Activated CD4-positive, alpha-beta memory T cell treated with anti-CD3 and anti-CD28 coated beads, Interleukin-2, amount 10 ng/mL, durations not matched to agents 7 days and 5 days (primary cell): ENCODE measurements at regions of chr7 and their contacts with region 1.

Region 1: DNA sequence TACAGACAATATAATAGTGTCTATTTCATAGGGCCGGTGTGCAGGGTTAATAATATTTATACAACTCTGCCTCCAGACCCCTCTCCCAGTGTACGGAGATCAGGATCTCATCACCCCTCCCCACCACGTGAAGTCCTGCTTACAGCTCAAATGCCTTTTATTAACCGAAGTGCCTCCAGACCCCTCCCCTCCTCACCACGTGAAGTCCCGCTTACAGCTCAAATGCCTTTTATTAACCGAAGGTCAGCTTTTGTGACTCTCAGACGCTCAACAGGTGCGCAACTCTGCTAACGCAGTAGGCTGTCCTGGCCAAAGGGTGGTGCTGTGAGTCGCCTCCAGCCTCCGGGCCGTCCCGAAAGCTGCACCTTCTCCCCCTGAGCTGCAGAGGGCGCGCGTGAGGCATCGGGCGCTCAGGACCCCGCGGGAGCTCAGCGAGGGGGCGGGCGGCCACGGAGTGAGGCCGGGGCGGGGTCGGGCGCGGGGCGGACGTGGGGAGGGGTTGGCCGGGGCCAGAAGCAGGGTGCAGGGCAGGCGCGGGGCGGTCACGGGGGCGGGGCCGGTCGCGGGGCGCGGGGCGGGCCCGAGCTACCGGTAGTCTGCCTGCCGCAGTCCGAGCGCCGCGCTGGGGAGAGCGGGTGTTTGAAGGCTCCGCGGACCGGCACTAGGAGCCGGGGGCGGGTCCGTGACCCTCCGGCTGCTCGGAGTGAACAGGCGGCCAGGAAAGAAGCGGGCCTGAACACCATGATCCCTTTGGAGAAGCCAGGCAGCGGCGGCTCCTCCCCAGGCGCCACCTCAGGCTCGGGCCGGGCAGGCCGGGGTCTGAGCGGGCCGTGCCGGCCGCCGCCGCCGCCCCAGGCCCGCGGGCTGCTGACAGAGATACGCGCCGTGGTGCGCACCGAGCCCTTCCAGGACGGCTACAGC is at the start of gene STK17A:
- DNase-seq: peak; percentile 96
- H3K4me3 Mint-ChIP-seq: peak within 1 kb of the TSS; percentile 100
- H3K27ac Mint-ChIP-seq: peak within 1 kb of the TSS; percentile 100
- H3K4me1 Mint-ChIP-seq: peaks cover 31% of the 10 kb centered on the region
- H3K27me3 Mint-ChIP-seq: peaks cover 19% of the 10 kb centered on the region
- total RNA-seq, gene STK17A: 89.5 to 90.3 TPM

Region 2: GRCh38 chr7:42843205-42843800 is 739.5 kb before region 1 on chr7:
- CTCF ChIA-PET with region 1: no interaction called
- POLR2A ChIA-PET with region 1: no interaction called
- DNase-seq: no peak
- H3K4me3 Mint-ChIP-seq: no peak overlapping the region
- H3K27ac Mint-ChIP-seq: no peak overlapping the region
- H3K4me1 Mint-ChIP-seq: no peaks in the 10 kb centered on the region
- H3K27me3 Mint-ChIP-seq: peaks cover 20% of the 10 kb centered on the region

Region 3: DNA sequence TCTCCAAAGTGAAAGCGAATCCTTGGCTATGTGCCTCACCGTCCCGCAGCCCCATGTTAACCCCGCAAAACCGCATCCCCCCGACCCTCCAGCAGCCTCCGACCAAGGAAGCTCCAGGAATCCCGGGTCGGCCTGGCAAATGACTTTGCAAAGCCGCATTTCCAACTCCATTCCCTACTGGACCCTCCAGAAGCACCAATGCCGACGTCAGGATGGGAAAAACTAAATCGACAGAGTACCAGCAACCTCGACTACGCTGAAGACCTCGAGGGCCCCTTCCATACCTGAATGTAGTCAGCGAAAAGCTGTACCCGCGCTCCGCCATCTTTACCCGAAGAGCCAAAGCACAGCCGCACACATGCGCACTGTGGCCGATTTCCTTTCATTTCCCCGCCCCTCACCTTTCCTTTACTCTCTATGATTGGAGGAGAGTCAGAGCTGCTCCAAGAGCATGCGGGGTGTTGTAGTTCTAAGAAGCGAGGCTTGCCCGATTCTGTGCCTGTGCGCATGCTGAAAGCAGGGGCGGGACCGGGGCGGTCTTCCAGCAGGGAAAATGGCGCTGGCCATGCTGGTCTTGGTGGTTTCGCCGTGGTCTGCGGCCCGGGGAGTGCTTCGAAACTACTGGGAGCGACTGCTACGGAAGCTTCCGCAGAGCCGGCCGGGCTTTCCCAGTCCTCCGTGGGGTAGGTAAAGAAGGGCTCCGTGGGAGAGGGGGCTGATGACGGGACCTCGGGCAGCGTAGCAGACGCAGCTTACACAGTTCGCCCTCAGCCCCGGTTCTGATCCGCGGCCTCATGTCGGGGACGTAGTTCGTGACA is 650.7 kb before region 1 on chr7 and contains the starts of genes MRPL32 and PSMA2:
- CTCF ChIA-PET with region 1: interaction called, 6 read pairs
- POLR2A ChIA-PET with region 1: interaction called, 10 read pairs
- DNase-seq: peak; percentile 95
- H3K4me3 Mint-ChIP-seq: peak within 1 kb of the TSS; percentile 97
- H3K27ac Mint-ChIP-seq: peak within 1 kb of the TSS; percentile 93
- H3K4me1 Mint-ChIP-seq: peaks cover 67% of the 10 kb centered on the region
- H3K27me3 Mint-ChIP-seq: no peaks in the 10 kb centered on the region
- total RNA-seq, gene MRPL32: 47.2 to 47.4 TPM
- total RNA-seq, gene PSMA2: 132 to 133 TPM

Region 4: DNA sequence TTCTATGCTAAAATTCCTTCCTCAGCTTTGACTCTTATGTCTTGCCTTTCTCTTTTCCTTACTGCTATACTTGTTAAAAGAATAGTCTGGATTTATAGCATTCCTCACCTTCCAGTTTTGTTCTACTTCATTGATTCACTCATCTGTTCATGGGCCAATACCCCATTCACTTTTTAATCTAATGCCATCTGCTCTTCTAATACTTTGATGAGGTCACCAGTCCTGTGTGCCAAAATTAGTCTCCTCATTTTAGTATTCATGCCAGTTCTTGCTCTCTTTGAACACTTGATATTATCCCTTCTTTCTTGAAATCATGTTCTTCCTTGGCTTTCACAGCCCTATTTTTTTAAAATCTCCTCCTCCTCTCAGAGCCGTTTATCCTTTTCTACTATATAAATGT is 19.5 kb after region 1 on chr7:
- CTCF ChIA-PET with region 1: interaction called, 14 read pairs
- POLR2A ChIA-PET with region 1: interaction called, 7 read pairs
- DNase-seq: no peak
- H3K4me3 Mint-ChIP-seq: no peak overlapping the region
- H3K27ac Mint-ChIP-seq: no peak overlapping the region
- H3K4me1 Mint-ChIP-seq: peaks cover 28% of the 10 kb centered on the region
- H3K27me3 Mint-ChIP-seq: no peaks in the 10 kb centered on the region

Region 5: DNA sequence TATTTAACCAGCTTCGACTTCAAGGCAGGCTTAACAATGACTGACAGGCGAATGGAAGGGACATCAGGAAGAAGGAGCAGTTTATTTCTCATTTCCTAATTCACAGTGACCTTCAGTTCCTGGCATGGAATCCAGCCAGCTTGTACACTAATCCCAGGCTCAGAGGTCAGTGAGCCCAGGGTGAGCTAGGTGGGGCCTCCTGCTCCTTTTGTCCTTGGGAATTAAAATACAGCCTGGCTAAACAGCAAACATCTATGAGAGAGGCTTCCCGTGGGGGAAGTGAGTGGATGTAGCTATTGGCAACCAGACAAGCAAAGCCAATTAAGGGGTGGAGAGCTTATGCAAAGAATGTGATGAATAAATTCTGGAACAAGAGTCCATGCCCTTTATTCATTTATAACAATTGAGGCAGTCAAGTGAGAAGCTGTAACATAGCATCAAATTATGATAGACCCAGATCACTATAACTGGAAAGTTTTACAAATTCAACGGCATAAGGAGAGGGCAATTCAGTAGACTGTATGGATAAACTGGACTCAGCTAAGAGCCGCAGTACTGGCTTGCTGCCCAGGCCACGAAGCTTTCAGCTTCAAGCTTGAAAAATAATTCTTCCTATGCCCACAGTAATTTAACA is 57.2 kb after region 1 on chr7:
- CTCF ChIA-PET with region 1: interaction called, 115 read pairs
- POLR2A ChIA-PET with region 1: interaction called, 304 read pairs
- DNase-seq: no peak
- H3K4me3 Mint-ChIP-seq: no peak overlapping the region
- H3K27ac Mint-ChIP-seq: no peak overlapping the region
- H3K4me1 Mint-ChIP-seq: peaks cover 57% of the 10 kb centered on the region
- H3K27me3 Mint-ChIP-seq: no peaks in the 10 kb centered on the region

Region 6: GRCh38 chr7:43669286-43670081 is 86.7 kb after region 1 on chr7:
- CTCF ChIA-PET with region 1: interaction called, 33 read pairs
- POLR2A ChIA-PET with region 1: interaction called, 22 read pairs
- DNase-seq: peak; percentile 81
- H3K4me3 Mint-ChIP-seq: peak overlapping the region; percentile 70
- H3K27ac Mint-ChIP-seq: peak overlapping the region; percentile 93
- H3K4me1 Mint-ChIP-seq: peaks cover 65% of the 10 kb centered on the region
- H3K27me3 Mint-ChIP-seq: no peaks in the 10 kb centered on the region

Region 7: GRCh38 chr7:43693687-43694398 is 111.1 kb after region 1 on chr7:
- CTCF ChIA-PET with region 1: interaction called, 452 read pairs
- POLR2A ChIA-PET with region 1: interaction called, 166 read pairs
- DNase-seq: no peak
- H3K4me3 Mint-ChIP-seq: no peak overlapping the region
- H3K27ac Mint-ChIP-seq: no peak overlapping the region
- H3K4me1 Mint-ChIP-seq: peaks cover 6% of the 10 kb centered on the region
- H3K27me3 Mint-ChIP-seq: no peaks in the 10 kb centered on the region

Region 8: DNA sequence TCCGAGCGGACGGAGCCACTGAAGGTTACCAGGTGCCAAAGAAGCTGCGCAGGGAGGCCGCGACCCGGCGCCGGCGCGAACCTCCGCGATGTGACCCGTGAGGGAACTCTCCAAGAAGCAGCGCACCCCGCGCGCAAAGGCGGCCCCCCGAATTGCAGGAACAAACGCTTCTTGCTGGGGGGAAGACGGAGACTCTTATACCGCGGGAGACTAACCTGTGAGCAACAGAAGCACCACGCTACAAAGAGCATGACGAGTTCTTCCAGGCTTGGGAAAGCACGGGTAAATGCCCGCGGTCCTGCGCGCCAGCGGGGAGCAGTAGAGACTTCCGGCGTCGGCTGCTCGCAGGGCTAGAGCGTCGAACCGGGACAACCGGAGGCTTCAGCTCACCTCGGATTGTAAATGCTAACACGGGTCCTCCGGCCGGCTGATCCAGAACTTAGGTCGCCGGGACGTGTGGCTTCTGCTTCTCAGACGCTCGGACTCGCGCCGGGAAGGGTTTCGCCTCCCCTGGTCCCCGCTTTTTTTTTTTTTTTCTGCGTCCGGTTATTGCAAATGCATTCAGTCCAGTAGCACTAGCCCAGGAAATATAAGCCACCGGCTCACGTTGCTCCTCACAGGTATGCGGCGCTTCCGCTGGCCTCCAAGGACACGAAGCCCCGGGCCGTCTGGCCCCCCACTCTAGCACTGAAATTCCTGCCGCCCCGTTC is 146.6 kb after region 1 on chr7 and contains the start of gene COA1:
- CTCF ChIA-PET with region 1: interaction called, 118 read pairs
- POLR2A ChIA-PET with region 1: interaction called, 23 read pairs
- DNase-seq: peak; percentile 82
- H3K4me3 Mint-ChIP-seq: peak within 1 kb of the TSS; percentile 91
- H3K27ac Mint-ChIP-seq: peak within 1 kb of the TSS; percentile 73
- H3K4me1 Mint-ChIP-seq: peaks cover 43% of the 10 kb centered on the region
- H3K27me3 Mint-ChIP-seq: no peaks in the 10 kb centered on the region
- total RNA-seq, gene COA1: 56.0 to 57.3 TPM